ENCODE measurements at regions of chr20 and their contacts with region 1.

Region 1: DNA sequence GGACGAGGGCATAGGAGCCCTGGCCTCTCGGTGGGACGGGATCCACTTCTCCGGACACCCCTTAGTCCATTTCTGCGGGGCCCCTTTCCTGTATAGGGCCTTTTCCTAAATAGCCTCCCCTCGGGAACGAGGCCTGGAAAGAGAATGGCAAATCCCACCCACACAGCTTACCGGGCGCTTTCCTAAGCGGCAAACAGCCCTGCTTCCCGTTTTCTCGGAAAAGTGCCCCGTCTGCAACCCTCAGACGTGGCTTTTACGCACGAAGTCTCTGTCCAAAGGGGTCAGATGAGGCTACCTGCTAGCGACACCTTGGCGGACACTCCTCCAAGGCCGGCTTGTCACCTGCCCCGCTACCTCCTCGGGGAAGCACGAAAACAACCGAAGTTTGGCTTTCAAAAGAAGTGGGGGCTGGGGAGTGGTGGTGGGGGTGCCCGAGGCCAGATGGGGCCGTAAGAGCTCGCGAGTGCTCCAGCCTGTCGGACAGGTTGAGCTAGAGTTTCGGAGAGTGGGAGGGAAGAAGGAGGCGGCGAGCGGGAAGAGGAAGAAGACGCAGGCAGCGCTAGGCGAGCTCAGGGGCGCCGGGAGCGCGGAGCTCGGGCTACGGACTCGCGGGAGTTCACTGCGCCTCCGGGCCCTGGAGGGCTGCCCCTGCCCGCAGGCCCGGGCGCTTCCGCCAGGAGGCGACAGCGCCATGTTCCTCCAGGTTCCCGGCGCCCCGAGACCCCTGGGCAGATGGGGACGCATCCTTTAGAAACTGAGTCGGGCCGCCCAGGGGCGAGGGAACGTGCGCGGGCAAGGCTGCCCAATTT is 768 bp downstream of the TFAP2C start:
- DNase-seq: no peak
- H3K4me3 Mint-ChIP-seq: no peak overlapping the region
- H3K27ac Mint-ChIP-seq: peak overlapping the region; percentile 29
- H3K4me1 Mint-ChIP-seq: no peaks in the 10 kb centered on the region
- H3K27me3 Mint-ChIP-seq: peaks cover 74% of the 10 kb centered on the region

Region 2: GRCh38 chr20:56925082-56925830 is 295.4 kb after region 1 on chr20:
- intact Hi-C with region 1: loop called (anchors 2 kb)
- DNase-seq: no peak
- H3K4me3 Mint-ChIP-seq: no peak overlapping the region
- H3K27ac Mint-ChIP-seq: no peak overlapping the region
- H3K4me1 Mint-ChIP-seq: no peaks in the 10 kb centered on the region
- H3K27me3 Mint-ChIP-seq: peaks cover 71% of the 10 kb centered on the region

Region 3: DNA sequence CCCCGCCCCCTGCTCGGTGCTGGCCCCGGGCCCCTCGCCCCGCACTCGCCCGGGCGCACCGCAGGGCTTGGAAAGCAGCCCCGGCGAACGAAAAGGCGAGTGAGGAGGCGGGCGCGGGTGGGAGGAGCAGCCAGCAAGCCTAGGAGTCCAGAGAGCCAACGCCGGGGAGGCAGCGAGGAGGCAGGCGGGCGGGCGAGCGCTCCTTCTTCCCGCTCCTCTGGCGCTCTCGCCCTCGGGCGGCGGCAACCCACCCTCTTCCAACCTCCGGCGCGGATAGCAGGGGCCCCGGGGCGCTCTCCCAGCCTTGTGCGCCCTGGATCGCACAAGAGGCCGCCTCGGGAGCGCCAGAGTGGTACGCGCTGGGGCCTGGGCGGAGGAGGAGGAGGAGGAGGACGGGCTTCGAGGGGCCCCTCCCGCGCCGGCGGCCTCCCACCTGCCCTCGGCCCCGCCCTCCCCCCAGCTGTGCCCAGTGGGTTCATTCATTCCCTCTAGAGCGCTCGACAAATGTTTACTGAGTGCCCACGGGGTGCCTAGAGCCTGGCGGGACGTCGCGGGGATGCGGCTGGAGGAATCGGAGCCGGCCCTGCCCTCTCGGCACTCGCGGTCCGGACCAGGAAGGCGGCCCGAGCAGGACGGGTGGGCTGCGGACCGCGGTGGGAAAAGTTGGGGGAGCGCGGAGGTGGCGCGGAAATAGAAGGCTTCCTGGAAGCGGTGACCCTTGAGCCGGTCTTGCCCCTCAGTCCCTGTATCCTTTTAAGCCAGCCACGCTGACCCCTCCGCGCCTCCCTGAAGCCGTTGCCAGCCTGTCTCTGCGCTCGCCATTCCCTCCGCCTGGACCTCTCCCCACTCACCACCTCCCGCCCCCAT is 636.6 kb after region 1 on chr20 and contains the start of gene BMP7:
- intact Hi-C with region 1: loop called (anchors 5 kb)
- DNase-seq: no peak
- H3K4me3 Mint-ChIP-seq: no peak within 1 kb of the TSS
- H3K27ac Mint-ChIP-seq: no peak within 1 kb of the TSS
- H3K4me1 Mint-ChIP-seq: peaks cover 5% of the 10 kb centered on the region
- H3K27me3 Mint-ChIP-seq: peaks cover 74% of the 10 kb centered on the region
- total RNA-seq, gene BMP7: 0.12 and 0.21 TPM in 2 replicates

Measured in activated T-helper 1 cell treated with anti-CD3 and anti-CD28 coated beads, Interleukin-12 subunit alpha, Interleukin-12 subunit beta, Interleukin-2, Interleukin-4 antibody, amounts not matched to agents 30 ng/mL and 10 ng/mL and 1 ng/mL, durations not matched to agents 14 hours and 24 hours and 36 hours (primary cell).